ENCODE measurements at regions of chr9 and their contacts with region 1.

Region 1: GRCh38 chr9:124537926-124538325 is 30.7 kb upstream of the NR5A1 start:
- DNase-seq: no peak
- ATAC-seq: no peak
- H3K4me3 ChIP-seq: no peak overlapping the region
- H3K27ac ChIP-seq: no peak overlapping the region
- H3K4me1 ChIP-seq: no peaks in the 10 kb centered on the region
- H3K27me3 ChIP-seq: no peaks in the 10 kb centered on the region
- CTCF ChIP-seq: no peak
- EP300 ChIP-seq: no peak
- POLR2A ChIP-seq: no peak
- RAD21 ChIP-seq: no peak

Region 2: DNA sequence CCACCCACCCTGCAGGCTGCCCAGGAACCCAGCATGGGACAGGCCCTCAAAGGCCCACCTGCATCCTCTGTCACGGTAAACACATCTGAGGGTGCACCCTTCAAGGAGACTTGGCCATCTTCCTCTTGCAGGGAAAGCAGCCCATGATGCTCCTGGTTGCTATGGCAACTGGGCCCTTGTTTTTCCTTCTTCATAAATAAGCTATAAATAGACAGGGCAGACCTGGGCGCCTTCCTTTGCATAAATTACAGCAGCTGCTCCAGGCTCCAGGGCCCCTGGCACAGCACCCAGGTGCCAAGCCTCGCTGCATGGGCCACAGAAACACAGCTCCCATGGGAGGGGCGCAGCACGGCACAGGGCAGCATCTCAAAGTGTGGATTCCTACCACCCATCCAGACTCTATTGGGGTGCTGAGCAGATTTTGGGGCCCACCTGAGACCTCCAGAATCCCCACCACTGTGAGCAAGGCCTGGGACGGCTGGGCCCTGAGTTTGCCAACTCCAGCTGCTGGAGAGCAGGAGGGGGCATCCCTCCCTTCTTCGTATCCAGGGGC is 116.9 kb before region 1 on chr9:
- CTCF ChIA-PET with region 1: interaction called, 69 read pairs
- POLR2A ChIA-PET with region 1: interaction called, 4 read pairs
- RAD21 ChIA-PET with region 1: interaction called, 36 read pairs
- SMC1A ChIA-PET with region 1: interaction called, 44 read pairs
- in situ Hi-C with region 1: loop called (anchors 5 kb)
- intact Hi-C with region 1: loop called (anchors 1 kb)
- DNase-seq: no peak
- ATAC-seq: no peak
- H3K4me3 ChIP-seq: no peak overlapping the region
- H3K27ac ChIP-seq: no peak overlapping the region
- H3K4me1 ChIP-seq: peaks cover 9% of the 10 kb centered on the region
- H3K27me3 ChIP-seq: no peaks in the 10 kb centered on the region
- CTCF ChIP-seq: no peak
- EP300 ChIP-seq: no peak
- POLR2A ChIP-seq: no peak
- RAD21 ChIP-seq: no peak

Region 3: DNA sequence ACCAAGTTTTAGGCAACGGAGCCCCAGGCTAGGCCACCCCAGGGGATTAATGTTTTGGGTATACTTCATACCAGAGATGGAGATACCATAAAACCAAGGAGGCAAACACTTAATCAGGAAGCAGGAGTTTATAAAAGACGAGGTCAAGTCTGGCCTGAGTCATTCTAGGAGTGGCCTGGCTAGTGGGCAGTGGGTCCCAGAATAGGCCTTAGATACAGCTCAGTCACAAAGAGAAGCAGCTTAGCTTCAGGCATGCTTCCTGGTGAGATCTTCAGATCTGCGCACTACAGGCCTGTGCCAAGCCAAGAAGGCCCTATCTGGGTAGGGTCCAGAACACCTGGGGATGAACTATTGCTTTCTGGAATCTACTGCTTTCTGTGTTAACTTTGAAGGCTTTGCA is 10.1 kb before region 1 on chr9:
- CTCF ChIA-PET with region 1: interaction called, 40 read pairs
- POLR2A ChIA-PET with region 1: no interaction called
- RAD21 ChIA-PET with region 1: interaction called, 4 read pairs
- SMC1A ChIA-PET with region 1: interaction called, 8 read pairs
- in situ Hi-C with region 1: no loop called
- intact Hi-C with region 1: no loop called
- DNase-seq: no peak
- ATAC-seq: no peak
- H3K4me3 ChIP-seq: no peak overlapping the region
- H3K27ac ChIP-seq: no peak overlapping the region
- H3K4me1 ChIP-seq: no peaks in the 10 kb centered on the region
- H3K27me3 ChIP-seq: no peaks in the 10 kb centered on the region
- CTCF ChIP-seq: no peak
- EP300 ChIP-seq: no peak
- POLR2A ChIP-seq: no peak
- RAD21 ChIP-seq: no peak

Region 4: GRCh38 chr9:124551472-124552272 is 13.7 kb after region 1 on chr9:
- CTCF ChIA-PET with region 1: interaction called, 32 read pairs
- POLR2A ChIA-PET with region 1: no interaction called
- RAD21 ChIA-PET with region 1: interaction called, 4 read pairs
- SMC1A ChIA-PET with region 1: interaction called, 7 read pairs
- in situ Hi-C with region 1: no loop called
- intact Hi-C with region 1: no loop called
- DNase-seq: peak; percentile 4
- ATAC-seq: peak; percentile 71
- H3K4me3 ChIP-seq: no peak overlapping the region
- H3K27ac ChIP-seq: no peak overlapping the region
- H3K4me1 ChIP-seq: no peaks in the 10 kb centered on the region
- H3K27me3 ChIP-seq: no peaks in the 10 kb centered on the region
- CTCF ChIP-seq: peak; percentile 28 to 69 (median 61); a peak in 5 of 6 replicates
- EP300 ChIP-seq: no peak
- POLR2A ChIP-seq: no peak
- RAD21 ChIP-seq: peak; percentile 88

Region 5: GRCh38 chr9:124574534-124575341 is 36.8 kb after region 1 on chr9:
- CTCF ChIA-PET with region 1: interaction called, 10 read pairs
- POLR2A ChIA-PET with region 1: interaction called, 4 read pairs
- RAD21 ChIA-PET with region 1: no interaction called
- SMC1A ChIA-PET with region 1: interaction called, 3 read pairs
- in situ Hi-C with region 1: no loop called
- intact Hi-C with region 1: no loop called
- DNase-seq: no peak
- ATAC-seq: no peak
- H3K4me3 ChIP-seq: no peak overlapping the region
- H3K27ac ChIP-seq: no peak overlapping the region
- H3K4me1 ChIP-seq: no peaks in the 10 kb centered on the region
- H3K27me3 ChIP-seq: no peaks in the 10 kb centered on the region
- CTCF ChIP-seq: no peak
- EP300 ChIP-seq: no peak
- POLR2A ChIP-seq: no peak
- RAD21 ChIP-seq: no peak

Region 6: GRCh38 chr9:124684169-124684568 is 146.2 kb after region 1 on chr9:
- CTCF ChIA-PET with region 1: no interaction called
- POLR2A ChIA-PET with region 1: no interaction called
- RAD21 ChIA-PET with region 1: no interaction called
- SMC1A ChIA-PET with region 1: no interaction called
- in situ Hi-C with region 1: no loop called
- intact Hi-C with region 1: no loop called
- DNase-seq: no peak
- ATAC-seq: no peak
- H3K4me3 ChIP-seq: no peak overlapping the region
- H3K27ac ChIP-seq: no peak overlapping the region
- H3K4me1 ChIP-seq: peaks cover 5% of the 10 kb centered on the region
- H3K27me3 ChIP-seq: no peaks in the 10 kb centered on the region
- CTCF ChIP-seq: no peak
- EP300 ChIP-seq: no peak
- POLR2A ChIP-seq: no peak
- RAD21 ChIP-seq: no peak

Measured in GM12878 (cell line).